ENCODE measurements at regions of chr9 and their contacts with region 1.

Region 1: DNA sequence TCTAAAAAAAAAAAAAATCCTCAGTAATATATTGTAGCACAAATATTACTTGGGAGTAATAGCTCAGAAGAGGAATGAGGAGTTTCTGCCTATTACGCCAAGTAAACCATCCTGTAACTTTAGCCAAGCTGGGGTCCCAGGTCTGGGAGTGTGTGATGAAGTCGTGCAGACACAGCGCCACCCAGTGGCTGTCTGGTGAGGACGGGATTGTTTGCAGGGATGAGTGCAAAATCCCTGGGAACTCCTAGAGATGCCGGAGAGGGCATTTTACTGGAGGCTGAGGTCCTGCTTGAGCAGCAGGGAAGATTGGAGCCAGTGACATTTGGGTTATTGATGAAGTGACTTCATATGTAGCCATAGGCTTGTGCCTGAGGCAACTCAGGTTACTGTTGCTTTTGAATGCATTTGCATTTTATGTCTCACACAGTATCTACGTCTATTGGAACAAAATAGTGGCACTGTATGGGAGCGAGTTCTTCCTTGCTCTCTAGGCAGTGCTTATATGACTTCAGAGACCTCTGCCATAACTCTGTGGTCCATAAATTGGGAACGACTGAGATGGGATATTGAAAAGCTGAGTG is 72.8 kb downstream of the PSAT1 start:
- DNase-seq: peak; percentile 85

Region 2: DNA sequence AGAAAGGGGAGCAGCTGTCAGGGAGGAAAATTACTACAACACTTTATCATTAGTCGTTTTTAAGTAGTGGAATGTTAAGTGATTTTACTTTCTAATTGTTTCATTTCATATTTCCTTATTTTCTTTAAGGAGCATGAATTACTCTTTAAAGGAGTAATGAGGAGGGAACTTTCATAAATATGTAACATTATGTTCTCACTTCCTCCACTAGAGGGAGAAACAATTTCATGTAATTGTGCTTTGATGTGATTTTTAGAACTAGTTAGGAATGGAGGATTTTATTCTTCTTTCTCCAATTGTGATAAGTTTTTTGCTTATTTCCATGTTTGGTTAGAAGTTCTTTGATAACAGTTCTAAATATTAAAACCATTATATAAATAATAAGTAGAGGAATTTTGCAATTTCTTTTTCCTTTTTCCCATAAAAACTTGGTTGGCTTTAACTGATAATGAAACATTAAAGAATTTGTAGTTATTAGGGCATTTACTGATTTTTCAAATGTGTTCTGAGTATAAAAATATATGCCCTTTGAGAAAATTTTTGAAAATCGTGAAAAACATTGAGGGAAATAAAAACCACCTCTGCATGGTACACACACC is 108.2 kb before region 1 on chr9:
- intact Hi-C with region 1: loop called in 1 of 2 experiments (anchors 10 kb)
- DNase-seq: no peak

Region 3: DNA sequence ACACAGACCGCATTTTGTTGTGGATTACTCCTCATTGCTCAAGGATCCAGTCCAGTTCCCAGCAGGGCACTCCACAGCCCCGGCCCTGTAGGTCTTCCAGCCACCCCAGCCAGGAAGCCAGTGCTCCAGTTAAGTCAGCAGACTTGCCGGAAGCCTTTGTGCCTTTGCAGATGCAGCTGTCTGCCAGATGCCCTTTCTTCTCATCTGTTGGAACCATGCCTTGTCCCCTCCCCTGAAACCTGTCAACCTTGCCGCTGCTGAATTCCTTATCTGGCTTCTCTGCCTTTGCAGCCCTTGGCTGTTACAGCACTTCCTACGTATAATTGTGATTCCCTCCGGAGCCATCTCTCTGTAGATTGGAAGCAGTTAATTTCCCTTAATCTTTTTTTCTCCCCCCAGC is 44.4 kb before region 1 on chr9:
- intact Hi-C with region 1: no loop called
- DNase-seq: no peak

Region 4: GRCh38 chr9:78422309-78422708 is 52.6 kb after region 1 on chr9:
- intact Hi-C with region 1: no loop called
- DNase-seq: no peak

Measured in posterior vena cava (tissue), 2 donors.